A673 (cell line): ENCODE measurements at regions of chr5 and their contacts with region 1.

Region 1: GRCh38 chr5:23446436-23446835 is 61.0 kb upstream of the PRDM9 start:
- DNase-seq: no peak
- H3K4me3 ChIP-seq: no peak overlapping the region
- H3K27ac ChIP-seq: no peak overlapping the region
- H3K4me1 ChIP-seq: no peaks in the 10 kb centered on the region
- H3K27me3 ChIP-seq: no peaks in the 10 kb centered on the region
- CTCF ChIP-seq: no peak

Region 2: GRCh38 chr5:21573915-21574314 is 1872.5 kb before region 1 on chr5:
- CTCF ChIA-PET with region 1: interaction called, 10 read pairs
- POLR2A ChIA-PET with region 1: no interaction called
- intact Hi-C with region 1: no loop called
- DNase-seq: peak; percentile 67
- H3K4me3 ChIP-seq: no peak overlapping the region
- H3K27ac ChIP-seq: no peak overlapping the region
- H3K4me1 ChIP-seq: peaks cover 18% of the 10 kb centered on the region
- H3K27me3 ChIP-seq: no peaks in the 10 kb centered on the region
- CTCF ChIP-seq: no peak

Region 3: DNA sequence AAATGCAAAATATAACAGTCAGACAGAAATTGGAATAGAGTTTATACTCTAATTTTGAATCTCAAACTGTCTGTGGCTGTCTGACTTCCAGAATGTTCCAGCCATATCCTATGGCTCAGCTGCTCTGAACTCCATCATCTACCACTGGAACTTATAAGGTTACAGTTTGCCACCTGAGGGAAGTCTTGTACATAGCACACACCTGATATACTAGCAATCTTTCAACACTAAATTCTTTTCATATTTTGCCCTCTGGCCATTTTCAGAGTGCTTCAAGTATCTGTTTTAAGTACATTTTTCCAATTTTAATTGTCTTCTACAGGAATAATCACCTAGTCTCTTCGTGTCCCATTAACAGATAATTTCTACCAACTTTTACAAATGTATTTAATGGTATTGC is 222.6 kb after region 1 on chr5:
- CTCF ChIA-PET with region 1: no interaction called
- POLR2A ChIA-PET with region 1: no interaction called
- intact Hi-C with region 1: no loop called
- DNase-seq: no peak
- H3K4me3 ChIP-seq: no peak overlapping the region
- H3K27ac ChIP-seq: no peak overlapping the region
- H3K4me1 ChIP-seq: no peaks in the 10 kb centered on the region
- H3K27me3 ChIP-seq: peaks cover 3% of the 10 kb centered on the region
- CTCF ChIP-seq: no peak